Activated CD4-positive, alpha-beta T cell treated with anti-CD3 and anti-CD28 coated beads for 36 hours (primary cell): ENCODE measurements at regions of chr11 and their contacts with region 1.

Region 1: DNA sequence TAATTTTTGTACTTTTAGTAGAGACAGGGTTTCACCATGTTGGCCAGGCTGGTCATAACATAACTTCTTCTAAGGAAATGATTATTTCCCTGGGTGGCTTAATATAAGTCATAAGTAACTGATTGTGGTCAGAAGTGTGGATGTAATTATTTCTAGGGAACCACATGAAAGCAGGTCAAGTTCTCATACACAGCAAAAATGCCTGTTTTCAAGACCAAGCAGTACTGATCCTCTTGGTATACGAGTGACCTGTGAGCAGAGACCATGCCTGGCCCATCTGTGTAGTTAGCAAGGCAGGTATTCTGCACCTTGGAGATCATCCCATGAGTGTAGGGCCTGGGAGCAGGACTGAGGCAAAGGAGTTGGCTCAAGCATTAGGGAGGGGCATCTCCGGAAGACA is 32.5 kb upstream of the NUCB2 start:
- DNase-seq: no peak
- ATAC-seq: peak; percentile 64
- H3K4me3 Mint-ChIP-seq: no peak overlapping the region
- H3K27ac Mint-ChIP-seq: no peak overlapping the region
- H3K4me1 Mint-ChIP-seq: peaks cover 4% of the 10 kb centered on the region
- H3K27me3 Mint-ChIP-seq: peaks cover 21% of the 10 kb centered on the region

Region 2: DNA sequence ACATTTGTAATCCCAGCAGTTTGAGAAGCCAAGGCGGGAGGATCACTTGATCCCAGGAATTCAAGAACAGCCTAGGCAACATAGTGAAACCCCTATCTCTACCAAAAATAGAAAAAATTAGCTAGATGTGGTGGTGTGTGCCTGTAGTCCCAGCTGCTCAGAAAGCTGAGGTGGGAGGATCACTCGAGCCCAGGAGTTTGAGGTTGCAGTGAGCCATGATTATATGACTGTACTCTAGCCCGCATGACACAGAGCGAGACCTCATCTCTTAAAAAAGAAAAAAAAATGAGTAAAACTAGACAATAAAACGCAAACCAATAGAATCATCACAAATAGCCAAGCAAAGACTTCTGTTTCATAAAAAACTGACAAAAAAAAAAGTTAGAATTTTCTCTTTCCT is 54.3 kb after region 1 on chr11:
- CTCF ChIA-PET with region 1: interaction called, 3 read pairs
- POLR2A ChIA-PET with region 1: no interaction called
- intact Hi-C with region 1: loop called in 1 of 2 experiments (anchors 2 kb)
- DNase-seq: peak; percentile 83
- ATAC-seq: peak; percentile 82
- H3K4me3 Mint-ChIP-seq: no peak overlapping the region
- H3K27ac Mint-ChIP-seq: no peak overlapping the region
- H3K4me1 Mint-ChIP-seq: peaks cover 40% of the 10 kb centered on the region
- H3K27me3 Mint-ChIP-seq: no peaks in the 10 kb centered on the region